H1 (cell line): ENCODE measurements at regions of chr13 and their contacts with region 1.

Region 1: DNA sequence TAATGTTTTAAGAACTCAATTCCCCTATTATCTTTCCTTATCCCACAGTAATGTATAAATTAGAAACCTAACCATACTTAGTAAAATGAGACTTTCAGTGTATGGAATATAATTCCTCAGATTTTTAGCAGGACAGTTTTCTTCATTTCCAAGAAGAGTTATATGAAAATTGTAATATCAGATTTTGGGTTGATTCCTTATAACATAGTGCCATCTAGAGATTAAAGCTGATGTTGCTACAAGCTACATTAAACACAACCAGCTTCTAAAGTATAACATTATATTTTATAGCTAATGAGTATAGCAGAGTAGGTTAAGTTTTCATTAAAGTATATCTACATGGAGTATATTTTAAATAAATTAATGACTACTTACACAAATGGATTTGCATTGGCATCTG is 99.7 kb upstream of the MIR17HG start:
- DNase-seq: no peak
- H3K4me3 ChIP-seq: no peak overlapping the region
- H3K27ac ChIP-seq: no peak overlapping the region
- H3K4me1 ChIP-seq: peaks cover 0 to 4% (median 0%) of the 10 kb centered on the region in 4 experiments; a peak in 2 of 7 replicates
- H3K27me3 ChIP-seq: no peaks in the 10 kb centered on the region
- CTCF ChIP-seq: peak in 2 of 3 experiments; percentile 22 to 38; a peak in 2 of 4 replicates
- EP300 ChIP-seq: no peak
- POLR2A ChIP-seq: no peak
- RAD21 ChIP-seq: peak in 1 of 2 experiments; percentile 62

Region 2: DNA sequence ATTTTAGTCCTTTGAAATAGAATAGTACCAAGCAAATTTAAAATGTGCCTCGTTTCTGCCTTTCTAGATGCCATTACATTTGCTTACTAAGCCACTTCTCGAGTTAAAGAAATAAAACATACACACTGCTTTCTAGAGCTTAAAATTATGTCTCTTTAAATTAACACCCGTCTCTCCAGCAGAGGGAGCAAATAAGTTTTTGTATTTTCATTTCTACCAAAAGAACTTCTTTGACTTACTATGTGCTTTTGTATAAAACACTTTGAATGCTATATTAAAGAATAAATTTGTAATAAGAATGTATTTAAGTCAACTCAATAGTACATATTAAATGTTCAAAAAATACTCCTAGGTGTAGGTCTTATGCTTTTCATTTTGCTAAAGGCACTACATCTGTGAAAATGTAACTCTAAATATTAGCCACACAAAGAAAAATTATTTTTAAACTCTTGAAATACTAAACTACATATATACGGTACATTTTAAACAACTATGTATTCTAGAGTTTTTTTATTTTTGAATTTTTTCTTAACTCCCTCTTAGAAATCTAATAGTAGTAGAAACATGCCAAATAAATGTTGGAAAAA is 169.6 kb before region 1 on chr13:
- CTCF ChIA-PET with region 1: interaction called, 11 read pairs
- POLR2A ChIA-PET with region 1: no interaction called
- DNase-seq: no peak
- H3K4me3 ChIP-seq: no peak overlapping the region
- H3K27ac ChIP-seq: no peak overlapping the region
- H3K4me1 ChIP-seq: no peaks in the 10 kb centered on the region
- H3K27me3 ChIP-seq: peaks cover 0 to 1% (median 0%) of the 10 kb centered on the region in 4 experiments; a peak in 1 of 7 replicates
- CTCF ChIP-seq: peak in 1 of 3 experiments; percentile 25; a peak in 1 of 4 replicates
- EP300 ChIP-seq: no peak
- POLR2A ChIP-seq: no peak
- RAD21 ChIP-seq: 0 out of 4 replicates have a peak, but pooled peaks of 1 of the 2 experiments have one; percentile 7

Region 3: GRCh38 chr13:91133941-91134802 is 113.6 kb before region 1 on chr13:
- CTCF ChIA-PET with region 1: interaction called, 10 read pairs
- POLR2A ChIA-PET with region 1: no interaction called
- DNase-seq: no peak
- H3K4me3 ChIP-seq: no peak overlapping the region
- H3K27ac ChIP-seq: no peak overlapping the region
- H3K4me1 ChIP-seq: peaks cover 0 to under 1% (median 0%) of the 10 kb centered on the region in 4 experiments; a peak in 2 of 7 replicates
- H3K27me3 ChIP-seq: no peaks in the 10 kb centered on the region
- CTCF ChIP-seq: peak; percentile 8 to 79 (median 74)
- EP300 ChIP-seq: no peak
- POLR2A ChIP-seq: no peak
- RAD21 ChIP-seq: peak; percentile 79 to 84

Region 4: DNA sequence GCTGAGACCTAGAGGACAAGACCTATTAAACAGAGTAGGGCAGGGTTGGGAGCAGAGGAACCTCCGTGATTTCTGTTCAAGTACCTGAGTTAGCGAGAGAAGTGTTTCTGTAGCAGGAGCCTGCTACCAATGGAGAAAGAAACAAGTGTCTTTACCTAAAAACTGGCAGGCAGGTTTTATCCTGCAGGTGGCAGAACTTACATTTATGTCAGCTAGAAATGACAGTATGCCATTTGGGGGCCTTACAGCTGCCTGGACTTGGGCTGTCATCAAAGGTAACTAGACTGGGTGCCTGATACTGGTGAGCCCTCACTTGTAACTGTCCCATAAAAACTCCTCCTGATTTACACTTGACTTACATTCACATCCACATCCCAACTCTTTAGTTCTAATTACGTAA is 85.6 kb before region 1 on chr13:
- CTCF ChIA-PET with region 1: interaction called, 11 read pairs
- POLR2A ChIA-PET with region 1: no interaction called
- DNase-seq: no peak
- H3K4me3 ChIP-seq: no peak overlapping the region
- H3K27ac ChIP-seq: no peak overlapping the region
- H3K4me1 ChIP-seq: no peaks in the 10 kb centered on the region
- H3K27me3 ChIP-seq: no peaks in the 10 kb centered on the region; a peak in 1 of 7 replicates
- CTCF ChIP-seq: peak in 2 of 3 experiments; percentile 51 to 55; a peak in 3 of 4 replicates
- EP300 ChIP-seq: no peak
- POLR2A ChIP-seq: no peak
- RAD21 ChIP-seq: peak; percentile 52 to 72